Naive thymus-derived CD8-positive, alpha-beta T cell (primary cell): ENCODE measurements at regions of chr11 and their contacts with region 1.

Region 1: GRCh38 chr11:64742889-64743590 is 902 bp downstream of the RASGRP2 start:
- DNase-seq: peak; percentile 57 to 91 (median 78)
- ATAC-seq: peak; percentile 7 to 11
- H3K4me3 Mint-ChIP-seq: peak overlapping the region in 8 of 10 donors; percentile 89 to 100 (median 99)
- H3K27ac Mint-ChIP-seq: peak overlapping the region in 7 of 10 donors; percentile 90 to 99 (median 98)
- H3K4me1 Mint-ChIP-seq: peaks cover 29 to 54% (median 44%) of the 10 kb centered on the region in 4 donors
- H3K27me3 Mint-ChIP-seq: peaks cover 0 to 2% (median 0%) of the 10 kb centered on the region in 5 donors

Region 2: DNA sequence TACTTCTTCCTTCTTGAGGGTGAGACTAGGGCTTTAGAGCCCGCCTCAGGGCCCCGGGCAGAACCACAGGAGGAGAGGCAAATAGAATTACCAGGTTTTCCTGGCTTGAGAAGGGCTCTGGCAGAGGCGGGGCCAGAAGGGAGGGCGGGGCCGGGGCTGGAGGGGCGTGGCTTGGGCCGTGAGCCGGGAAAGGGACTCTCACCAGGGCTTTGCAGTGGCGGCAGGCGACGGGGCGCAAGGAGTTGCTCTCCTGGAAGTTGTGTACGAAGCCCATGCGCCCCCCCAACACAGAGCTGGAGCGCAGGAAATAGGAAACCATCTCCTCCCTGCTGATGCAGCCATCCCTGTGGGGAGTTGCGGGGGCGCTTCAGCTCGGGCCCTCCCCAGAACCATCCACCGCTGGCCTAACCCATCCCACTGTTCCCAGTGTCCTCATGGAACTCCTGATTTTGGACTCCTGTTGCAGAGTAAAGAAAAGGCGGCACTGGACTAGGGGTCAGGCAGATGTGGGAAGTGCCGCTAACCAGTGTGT is 13.1 kb before region 1 on chr11:
- POLR2A ChIA-PET with region 1: interaction called, 19 read pairs
- DNase-seq: peak in 1 of 10 donors; percentile 28
- ATAC-seq: no peak
- H3K4me3 Mint-ChIP-seq: no peak overlapping the region
- H3K27ac Mint-ChIP-seq: peak overlapping the region in 7 of 10 donors; percentile 49 to 74 (median 71)
- H3K4me1 Mint-ChIP-seq: peaks cover 13 to 28% (median 26%) of the 10 kb centered on the region in 4 donors
- H3K27me3 Mint-ChIP-seq: no peaks in the 10 kb centered on the region

Region 3: GRCh38 chr11:64810271-64810890 is 67.3 kb after region 1 on chr11 and contains the start of gene MEN1:
- POLR2A ChIA-PET with region 1: interaction called, 26 read pairs
- DNase-seq: peak; percentile 59 to 88 (median 76)
- ATAC-seq: peak; percentile 90 to 92
- H3K4me3 Mint-ChIP-seq: peak within 1 kb of the TSS; percentile 91 to 99 (median 94)
- H3K27ac Mint-ChIP-seq: peak within 1 kb of the TSS; percentile 90 to 98 (median 96)
- H3K4me1 Mint-ChIP-seq: peaks cover 22 to 35% (median 29%) of the 10 kb centered on the region in 4 donors
- H3K27me3 Mint-ChIP-seq: no peaks in the 10 kb centered on the region
- polyA plus RNA-seq, gene MEN1: 22.1 to 57.4 (median 36.1) TPM

Region 4: DNA sequence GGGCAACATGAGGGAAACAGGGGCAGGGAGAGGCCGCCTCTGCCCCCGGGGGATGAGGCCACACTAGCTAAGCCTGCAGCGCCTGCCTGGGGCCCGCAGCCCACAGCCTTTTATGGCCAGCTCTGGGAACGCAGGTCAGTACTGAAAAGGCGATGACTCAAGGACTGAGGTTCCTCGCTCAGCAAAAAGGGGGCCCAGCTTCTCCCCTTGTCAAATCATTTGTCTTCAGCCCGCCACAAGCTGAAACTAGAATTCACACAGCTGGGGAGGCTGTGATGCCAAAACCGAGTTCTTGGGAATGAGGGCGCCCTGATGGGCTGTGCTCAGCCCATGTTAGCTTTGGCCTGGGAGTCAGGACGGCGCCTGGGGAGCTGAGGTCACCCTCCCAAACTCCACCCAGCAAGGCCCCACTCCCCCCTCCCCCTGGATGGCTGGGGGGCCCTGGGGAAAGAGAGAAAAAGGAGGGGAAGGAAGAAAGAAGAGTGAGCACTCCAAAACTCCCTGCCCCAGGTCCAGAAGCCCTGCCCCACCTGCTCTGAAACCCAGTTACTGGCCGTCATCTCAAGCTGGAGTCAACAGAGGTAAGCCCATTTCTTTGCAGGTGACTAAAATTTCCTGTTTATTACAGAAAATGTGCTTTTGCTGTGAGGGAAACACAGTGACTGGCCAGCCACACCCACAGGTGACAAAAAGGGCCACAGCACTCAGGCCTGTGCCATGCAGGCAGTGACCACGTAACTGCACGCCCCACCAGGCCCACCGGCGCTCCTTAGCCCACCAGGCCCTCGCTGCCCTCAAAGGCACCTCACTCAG is 121.6 kb after region 1 on chr11:
- POLR2A ChIA-PET with region 1: interaction called, 38 read pairs
- DNase-seq: peak in 1 of 10 donors; percentile 58
- ATAC-seq: peak in 1 of 2 donors; percentile 2
- H3K4me3 Mint-ChIP-seq: peak overlapping the region; percentile 66 to 85 (median 81)
- H3K27ac Mint-ChIP-seq: peak overlapping the region; percentile 72 to 99 (median 95)
- H3K4me1 Mint-ChIP-seq: peaks cover 42 to 97% (median 91%) of the 10 kb centered on the region in 4 donors
- H3K27me3 Mint-ChIP-seq: no peaks in the 10 kb centered on the region

Region 5: GRCh38 chr11:65117216-65118096 is 374.4 kb after region 1 on chr11 and contains the start of gene ZNHIT2:
- POLR2A ChIA-PET with region 1: interaction called, 15 read pairs
- DNase-seq: peak; percentile 96 to 100 (median 100)
- ATAC-seq: peak; percentile 60 to 66
- H3K4me3 Mint-ChIP-seq: peak within 1 kb of the TSS; percentile 87 to 94 (median 90)
- H3K27ac Mint-ChIP-seq: peak within 1 kb of the TSS; percentile 82 to 99 (median 97)
- H3K4me1 Mint-ChIP-seq: peaks cover 24 to 71% (median 51%) of the 10 kb centered on the region in 4 donors
- H3K27me3 Mint-ChIP-seq: no peaks in the 10 kb centered on the region
- polyA plus RNA-seq, gene ZNHIT2: 24.3 to 33.1 (median 29.8) TPM